Heart left ventricle (tissue), 16 donors: ENCODE measurements at regions of chrX and their contacts with region 1.

Region 1: GRCh38 chrX:69387567-69388487 is 116.3 kb upstream of the NALF2 start:
- DNase-seq: peak in 4 of 5 donors; percentile 22 to 51 (median 42)
- ATAC-seq: peak; percentile 61 to 81 (median 70)
- H3K4me3 ChIP-seq: no peak overlapping the region
- H3K27ac ChIP-seq: no peak overlapping the region
- H3K4me1 ChIP-seq: peaks cover 0 to 4% (median 0%) of the 10 kb centered on the region in 12 donors
- H3K27me3 ChIP-seq: peaks cover 0 to 26% (median 0%) of the 10 kb centered on the region in 9 donors
- CTCF ChIP-seq: peak; percentile 45 to 77 (median 65)
- POLR2A ChIP-seq: no peak

Region 2: DNA sequence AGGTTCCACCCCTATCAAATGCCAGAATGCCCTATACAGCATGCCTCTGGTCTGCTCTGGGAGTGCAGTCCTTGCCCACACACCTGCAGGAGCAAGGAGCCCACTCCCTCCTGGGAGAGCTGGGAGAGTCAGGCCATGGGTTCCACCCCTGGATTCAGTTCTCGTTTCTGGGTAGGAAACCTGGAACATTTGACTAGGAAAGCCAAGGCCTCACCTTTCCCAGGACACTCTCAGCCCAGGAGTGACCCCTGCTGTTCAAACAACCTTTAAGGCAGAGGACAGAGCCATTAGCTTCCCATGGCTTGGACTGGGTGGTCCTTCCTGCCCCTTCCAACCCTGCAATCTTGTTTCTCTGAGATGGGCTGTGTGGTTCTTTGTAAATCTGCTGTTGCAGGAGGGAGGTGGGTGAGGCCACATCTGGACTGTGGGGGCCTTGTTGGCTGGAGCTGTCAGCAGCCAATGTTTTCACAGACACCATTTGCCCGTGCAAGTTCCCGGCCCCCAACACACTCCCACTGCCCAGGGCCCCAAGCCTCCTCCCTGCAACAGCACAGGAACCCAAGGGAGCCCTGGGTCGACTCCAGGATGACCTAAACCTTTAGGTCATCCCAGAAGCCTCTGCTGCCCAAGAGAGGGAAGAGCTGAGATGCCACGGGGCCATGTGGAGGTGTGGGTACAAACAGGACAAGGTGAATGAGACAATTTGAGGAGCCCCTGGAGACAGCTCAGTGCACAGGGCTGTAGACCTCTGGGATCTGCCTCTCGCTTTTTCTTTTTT is 327.0 kb before region 1 on chrX:
- intact Hi-C with region 1: loop called in 1 of 10 experiments (anchors 10 kb)
- DNase-seq: peak in 4 of 5 donors; percentile 38 to 54 (median 43)
- ATAC-seq: peak; percentile 61 to 91 (median 80)
- H3K4me3 ChIP-seq: no peak overlapping the region
- H3K27ac ChIP-seq: no peak overlapping the region
- H3K4me1 ChIP-seq: peaks cover 0 to 6% (median 0%) of the 10 kb centered on the region in 12 donors
- H3K27me3 ChIP-seq: peaks cover 0 to 18% (median 0%) of the 10 kb centered on the region in 9 donors
- CTCF ChIP-seq: peak; percentile 14 to 63 (median 49)
- POLR2A ChIP-seq: no peak

Region 3: GRCh38 chrX:69222103-69223090 is 165.4 kb before region 1 on chrX:
- intact Hi-C with region 1: loop called in 4 of 10 experiments (anchors 5 to 10 kb)
- DNase-seq: peak; percentile 43 to 78 (median 58)
- ATAC-seq: peak; percentile 61 to 88 (median 80)
- H3K4me3 ChIP-seq: no peak overlapping the region
- H3K27ac ChIP-seq: no peak overlapping the region
- H3K4me1 ChIP-seq: peaks cover 0 to 8% (median 0%) of the 10 kb centered on the region in 12 donors
- H3K27me3 ChIP-seq: peaks cover 0 to 20% (median 0%) of the 10 kb centered on the region in 9 donors
- CTCF ChIP-seq: peak; percentile 60 to 75 (median 70)
- POLR2A ChIP-seq: no peak

Region 4: DNA sequence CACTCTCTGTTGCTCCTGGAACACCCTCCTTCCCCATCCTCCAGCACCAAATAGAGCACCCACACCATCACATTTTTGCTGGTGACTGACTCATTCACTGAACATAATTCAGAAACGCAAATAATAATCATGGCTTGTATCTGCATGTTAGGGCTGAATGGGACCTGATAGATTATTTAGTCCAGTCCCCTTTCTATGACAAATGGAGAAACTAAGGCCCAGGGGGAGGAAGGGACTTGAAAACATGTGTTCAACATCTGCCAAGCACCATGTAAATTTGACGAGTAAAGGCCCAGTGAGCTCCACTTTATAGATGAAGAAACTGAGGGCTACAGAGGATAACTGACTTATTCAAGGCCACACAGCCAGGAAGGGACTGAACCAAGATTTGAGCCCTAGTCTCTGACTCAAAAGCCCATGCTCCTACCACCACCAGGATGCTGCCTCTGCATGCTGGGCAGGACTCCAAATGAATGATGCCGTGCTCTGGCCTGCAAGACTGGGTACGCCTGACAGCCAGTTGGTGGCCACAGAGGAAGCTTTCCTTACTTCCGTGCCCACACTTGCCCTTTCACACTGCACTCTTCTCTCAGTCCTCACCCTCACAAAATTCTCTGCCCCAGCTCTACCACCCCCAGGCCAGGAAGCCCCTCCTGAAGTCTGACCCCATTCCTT is 89.2 kb before region 1 on chrX:
- intact Hi-C with region 1: loop called in 3 of 10 experiments (anchors 10 kb)
- DNase-seq: peak in 1 of 5 donors; percentile 41
- ATAC-seq: peak in 1 of 4 donors; percentile 60
- H3K4me3 ChIP-seq: no peak overlapping the region
- H3K27ac ChIP-seq: no peak overlapping the region
- H3K4me1 ChIP-seq: peaks cover 0 to 8% (median 0%) of the 10 kb centered on the region in 12 donors
- H3K27me3 ChIP-seq: peaks cover 0 to 11% (median 0%) of the 10 kb centered on the region in 9 donors
- CTCF ChIP-seq: no peak
- POLR2A ChIP-seq: no peak

Region 5: GRCh38 chrX:69429339-69430015 is 41.6 kb after region 1 on chrX:
- intact Hi-C with region 1: no loop called
- DNase-seq: peak in 3 of 5 donors; percentile 29 to 37 (median 31)
- ATAC-seq: peak in 3 of 4 donors; percentile 52 to 69 (median 64)
- H3K4me3 ChIP-seq: no peak overlapping the region
- H3K27ac ChIP-seq: peak overlapping the region in 2 of 12 donors; percentile 24 to 37
- H3K4me1 ChIP-seq: no peaks in the 10 kb centered on the region
- H3K27me3 ChIP-seq: peaks cover 0 to 23% (median 0%) of the 10 kb centered on the region in 9 donors
- CTCF ChIP-seq: no peak
- POLR2A ChIP-seq: no peak